Aorta (tissue), 5 donors: ENCODE measurements at regions of chr19 and their contacts with region 1.

Region 1: GRCh38 chr19:55117636-55118391 is at the start of gene PPP1R12C:
- DNase-seq: peak; percentile 99 to 100
- ATAC-seq: peak; percentile 94
- H3K4me3 ChIP-seq: peak within 1 kb of the TSS; percentile 51 to 59
- H3K27ac ChIP-seq: peak within 1 kb of the TSS; percentile 71 to 97
- H3K4me1 ChIP-seq: no peaks in the 10 kb centered on the region
- H3K27me3 ChIP-seq: no peaks in the 10 kb centered on the region
- total RNA-seq, gene PPP1R12C: 134 to 218 TPM

Region 2: DNA sequence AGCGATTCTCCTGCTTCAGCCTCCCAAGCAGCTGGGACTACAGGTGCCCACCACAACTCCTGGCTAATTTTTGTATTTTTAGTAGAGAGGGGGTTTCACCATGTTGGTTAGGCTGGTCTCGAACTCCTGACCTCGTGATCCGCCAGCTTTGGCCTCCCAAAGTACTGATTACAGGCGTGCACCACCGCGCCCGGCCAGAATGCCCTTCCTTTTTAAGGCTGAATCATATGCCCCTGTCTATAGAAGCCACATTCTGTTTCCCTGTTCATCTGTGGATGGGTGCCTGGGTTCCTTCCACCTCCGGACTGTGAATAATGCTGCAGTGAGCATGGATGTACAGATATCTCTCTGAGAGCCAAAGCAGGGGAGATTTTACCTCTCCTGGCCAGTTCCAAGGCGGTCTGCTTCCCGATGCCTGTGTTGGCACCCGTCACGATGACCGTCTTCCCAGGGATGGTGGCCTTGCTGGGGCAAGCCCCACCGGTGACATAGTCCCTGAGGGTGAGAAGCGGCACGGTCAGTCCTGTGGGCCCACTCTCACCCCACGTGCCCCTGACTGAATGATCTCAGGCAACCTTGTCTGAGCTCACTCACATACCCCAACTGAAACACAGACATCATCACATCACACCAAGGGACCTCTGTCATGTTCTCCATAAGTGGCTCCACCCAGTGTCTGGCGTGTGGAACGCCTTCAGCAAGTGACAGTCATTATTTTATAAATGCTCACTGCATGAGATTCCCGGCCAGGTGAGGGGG is 58.9 kb before region 1 on chr19:
- intact Hi-C with region 1: no loop called
- DNase-seq: no peak
- ATAC-seq: no peak
- H3K4me3 ChIP-seq: no peak overlapping the region
- H3K27ac ChIP-seq: no peak overlapping the region
- H3K4me1 ChIP-seq: no peaks in the 10 kb centered on the region
- H3K27me3 ChIP-seq: no peaks in the 10 kb centered on the region

Region 3: DNA sequence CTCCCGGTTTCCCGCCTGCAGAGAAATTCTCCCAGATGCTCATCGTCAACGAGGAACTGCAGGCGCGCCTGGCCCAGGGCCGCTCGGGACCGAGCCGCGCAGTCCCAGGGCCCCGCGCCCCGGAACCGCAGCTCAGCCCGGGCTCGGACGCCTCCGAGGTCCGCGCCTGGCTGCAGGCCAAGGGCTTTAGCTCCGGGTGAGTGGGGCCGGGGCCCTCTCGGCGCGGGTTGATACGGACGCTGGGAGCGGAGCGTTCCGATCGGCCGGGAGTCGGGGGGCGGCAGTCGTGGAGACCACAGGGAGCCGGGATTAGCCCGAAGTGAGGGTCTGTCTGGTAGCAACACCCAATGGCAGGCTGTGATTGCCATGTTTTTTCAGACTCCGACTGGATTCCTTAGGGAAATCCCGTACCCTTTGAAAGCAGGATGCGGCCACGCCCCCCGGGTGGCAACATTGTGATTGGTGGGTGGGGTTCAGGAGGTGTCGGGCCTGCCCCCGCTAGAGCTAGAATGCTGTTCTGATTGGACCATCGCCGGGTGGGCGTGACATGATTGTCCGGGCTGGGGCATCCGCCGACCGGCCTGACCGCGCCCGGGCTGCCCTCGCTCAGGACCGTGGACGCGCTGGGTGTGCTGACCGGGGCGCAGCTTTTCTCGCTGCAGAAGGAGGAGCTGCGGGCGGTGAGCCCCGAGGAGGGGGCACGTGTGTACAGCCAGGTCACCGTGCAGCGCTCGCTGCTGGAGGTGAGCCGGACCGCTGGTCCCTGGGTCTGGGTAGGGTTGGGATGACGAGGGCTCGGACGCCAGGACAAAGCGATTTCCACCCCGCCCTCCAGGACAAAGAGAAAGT is 30.9 kb before region 1 on chr19:
- intact Hi-C with region 1: loop called in 1 of 2 experiments (anchors 2 kb)
- DNase-seq: peak; percentile 94 to 98
- ATAC-seq: peak; percentile 82
- H3K4me3 ChIP-seq: peak overlapping the region; percentile 15 to 17
- H3K27ac ChIP-seq: no peak overlapping the region
- H3K4me1 ChIP-seq: no peaks in the 10 kb centered on the region
- H3K27me3 ChIP-seq: no peaks in the 10 kb centered on the region